Mammary epithelial cell (primary cell): ENCODE measurements at regions of chrX and their contacts with region 1.

Region 1: GRCh38 chrX:12955882-12956703 is 18.8 kb upstream of the TMSB4X start:
- DNase-seq: peak; percentile 73
- H3K4me3 ChIP-seq: no peak overlapping the region
- H3K27ac ChIP-seq: peak overlapping the region; percentile 76
- H3K4me1 ChIP-seq: peaks cover 22% of the 10 kb centered on the region
- H3K27me3 ChIP-seq: no peaks in the 10 kb centered on the region
- CTCF ChIP-seq: no peak

Region 2: DNA sequence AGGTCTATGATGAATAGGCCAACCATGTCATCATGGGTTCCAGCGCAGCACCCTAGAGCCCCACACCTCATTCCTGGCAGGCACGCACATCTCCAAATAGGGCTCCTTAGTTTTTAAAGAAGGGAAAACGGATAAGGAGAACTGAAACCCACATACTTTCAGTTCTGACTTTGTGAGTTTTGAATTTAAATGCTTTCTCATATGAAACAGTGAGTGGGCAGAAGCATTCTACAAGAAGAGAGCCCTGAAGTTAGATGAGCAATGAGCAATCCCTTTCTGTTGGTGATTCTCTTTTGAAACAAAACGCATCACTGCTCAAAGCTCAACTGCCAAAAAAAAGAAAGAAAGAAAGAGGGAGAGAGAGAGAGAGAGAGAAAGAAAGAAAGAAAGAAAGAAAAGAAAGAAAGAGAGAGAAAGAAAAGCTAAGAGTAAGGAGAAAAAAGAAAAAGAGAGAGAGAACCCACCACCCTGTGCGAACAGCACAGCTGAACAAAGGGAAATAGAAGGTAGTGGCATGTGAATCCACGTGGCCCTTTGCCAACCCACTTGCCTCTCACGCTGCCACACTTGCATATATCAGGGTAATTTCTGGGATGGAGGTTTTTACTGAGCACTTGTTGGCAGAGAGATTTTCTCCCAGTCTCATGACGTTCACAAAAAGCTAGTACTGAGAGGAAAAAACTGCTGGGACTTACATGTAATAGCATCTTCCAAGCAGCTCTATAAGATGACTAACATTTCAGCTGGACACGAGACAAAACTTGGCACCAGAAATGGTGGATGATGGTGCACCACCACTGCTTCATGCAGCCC is 49.8 kb after region 1 on chrX:
- CTCF ChIA-PET with region 1: no interaction called
- dilution Hi-C with region 1: no loop called
- in situ Hi-C with region 1: no loop called
- intact Hi-C with region 1: loop called (anchors 2 kb)
- DNase-seq: peak; percentile 42
- H3K4me3 ChIP-seq: no peak overlapping the region
- H3K27ac ChIP-seq: no peak overlapping the region
- H3K4me1 ChIP-seq: peaks cover 67% of the 10 kb centered on the region
- H3K27me3 ChIP-seq: no peaks in the 10 kb centered on the region
- CTCF ChIP-seq: no peak